Vagina (tissue), 2 donors: ENCODE measurements at regions of chr13 and their contacts with region 1.

Region 1: GRCh38 chr13:23212671-23213423 is 32.1 kb downstream of the SGCG start:
- DNase-seq: no peak
- H3K4me3 ChIP-seq: no peak overlapping the region
- H3K27ac ChIP-seq: no peak overlapping the region
- H3K4me1 ChIP-seq: no peaks in the 10 kb centered on the region
- H3K27me3 ChIP-seq: no peaks in the 10 kb centered on the region
- CTCF ChIP-seq: no peak
- POLR2A ChIP-seq: no peak

Region 2: GRCh38 chr13:21434588-21434987 is 1778.3 kb before region 1 on chr13:
- intact Hi-C with region 1: loop called (anchors 5 kb)
- DNase-seq: no peak
- H3K4me3 ChIP-seq: no peak overlapping the region
- H3K27ac ChIP-seq: no peak overlapping the region
- H3K4me1 ChIP-seq: peaks cover 14% of the 10 kb centered on the region
- H3K27me3 ChIP-seq: no peaks in the 10 kb centered on the region
- CTCF ChIP-seq: no peak
- POLR2A ChIP-seq: no peak